Left ventricle myocardium inferior (tissue), 1 donor: ENCODE measurements at regions of chr5 and their contacts with region 1.

Region 1: GRCh38 chr5:134411546-134412266 is at the start of gene CDKN2AIPNL:
- DNase-seq: peak; percentile 92
- H3K4me3 ChIP-seq: peak within 1 kb of the TSS; percentile 88
- H3K27ac ChIP-seq: peak within 1 kb of the TSS; percentile 93
- H3K4me1 ChIP-seq: peaks cover 44% of the 10 kb centered on the region
- H3K27me3 ChIP-seq: no peaks in the 10 kb centered on the region
- CTCF ChIP-seq: peak; percentile 86
- total RNA-seq, gene CDKN2AIPNL: 39.6 TPM

Region 2: DNA sequence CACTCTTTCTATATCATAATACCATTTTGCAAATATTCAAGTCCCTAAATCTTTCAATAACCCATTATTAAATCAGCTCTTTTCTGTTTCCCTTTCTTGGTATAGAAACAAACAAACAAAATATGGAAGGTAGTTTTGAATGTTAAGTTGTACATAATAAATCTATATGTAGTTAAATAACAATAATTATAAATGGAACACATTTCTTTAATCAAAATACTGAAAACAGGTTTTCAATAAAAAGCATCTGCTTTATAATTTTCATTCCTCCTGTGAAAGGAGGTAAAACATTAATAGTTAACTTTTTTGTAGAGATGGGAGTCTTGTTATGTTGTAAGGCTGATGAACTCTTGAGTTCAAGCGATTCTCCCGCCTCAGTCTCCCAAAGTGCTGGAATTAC is 98.9 kb before region 1 on chr5:
- intact Hi-C with region 1: loop called (anchors 10 kb)
- DNase-seq: no peak
- H3K4me3 ChIP-seq: no peak overlapping the region
- H3K27ac ChIP-seq: no peak overlapping the region
- H3K4me1 ChIP-seq: no peaks in the 10 kb centered on the region
- H3K27me3 ChIP-seq: no peaks in the 10 kb centered on the region
- CTCF ChIP-seq: no peak

Region 3: DNA sequence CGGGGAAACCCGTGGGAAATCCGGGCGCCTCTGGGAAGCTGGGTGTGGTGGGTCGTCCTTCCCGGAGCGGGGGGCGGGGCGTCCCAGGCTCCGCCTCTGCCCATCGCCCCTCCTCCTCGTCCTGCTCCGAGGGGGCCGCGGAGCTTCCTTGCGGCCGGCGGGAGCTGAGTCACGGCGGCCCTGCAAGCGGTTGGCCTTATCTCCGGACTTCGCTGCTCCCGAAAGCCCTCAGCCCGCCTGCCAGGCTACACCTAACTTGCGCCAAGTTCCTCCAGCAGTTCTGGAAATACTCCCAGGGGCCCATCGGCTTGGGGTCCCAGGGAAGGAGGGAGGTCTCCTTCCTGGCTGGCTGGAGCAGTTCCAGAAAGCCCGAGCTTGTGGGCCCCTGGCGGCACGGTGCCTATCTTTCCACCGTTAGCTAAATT is 54.1 kb after region 1 on chr5:
- intact Hi-C with region 1: loop called (anchors 5 kb)
- DNase-seq: peak; percentile 92
- H3K4me3 ChIP-seq: peak overlapping the region; percentile 70
- H3K27ac ChIP-seq: peak overlapping the region; percentile 100
- H3K4me1 ChIP-seq: peaks cover 47% of the 10 kb centered on the region
- H3K27me3 ChIP-seq: no peaks in the 10 kb centered on the region
- CTCF ChIP-seq: no peak